ENCODE measurements at regions of chr4 and their contacts with region 1.

Region 1: DNA sequence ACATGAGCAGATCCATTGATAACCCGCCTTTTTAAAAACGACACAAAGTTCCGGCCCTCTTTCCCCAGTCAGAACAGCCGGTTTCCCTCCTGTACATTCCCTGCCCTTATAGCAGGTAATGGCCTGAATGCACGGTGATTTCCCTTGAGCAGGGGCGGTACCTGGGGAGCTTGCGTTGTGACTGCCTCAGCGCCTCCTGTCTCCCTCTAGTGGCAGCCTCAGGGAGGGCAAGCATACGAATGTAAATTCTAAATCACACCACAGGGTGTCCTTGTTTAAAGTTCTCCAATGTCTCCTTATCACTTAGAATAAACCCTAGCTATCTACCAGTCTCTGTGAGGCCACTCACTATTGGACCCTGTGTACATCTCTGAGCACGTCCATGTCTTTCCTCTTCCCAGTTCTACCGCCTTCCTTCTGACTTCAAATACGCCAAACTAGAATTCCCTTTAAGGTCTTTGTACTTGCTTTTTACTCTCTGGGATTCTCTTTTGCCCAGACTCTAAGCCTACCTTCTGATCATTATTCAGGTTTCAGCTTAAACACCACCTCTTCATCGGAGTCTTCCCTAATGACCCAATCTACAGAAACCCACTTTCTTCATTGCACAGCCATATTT is 18.4 kb upstream of the LDB2 start:
- DNase-seq: peak; percentile 70
- ATAC-seq: peak; percentile 96
- H3K4me3 ChIP-seq: no peak overlapping the region
- H3K27ac ChIP-seq: no peak overlapping the region
- H3K4me1 ChIP-seq: no peaks in the 10 kb centered on the region
- H3K27me3 ChIP-seq: no peaks in the 10 kb centered on the region
- CTCF ChIP-seq: peak; percentile 97 to 98 (median 98)
- POLR2A ChIP-seq: no peak
- RAD21 ChIP-seq: peak; percentile 75

Region 2: DNA sequence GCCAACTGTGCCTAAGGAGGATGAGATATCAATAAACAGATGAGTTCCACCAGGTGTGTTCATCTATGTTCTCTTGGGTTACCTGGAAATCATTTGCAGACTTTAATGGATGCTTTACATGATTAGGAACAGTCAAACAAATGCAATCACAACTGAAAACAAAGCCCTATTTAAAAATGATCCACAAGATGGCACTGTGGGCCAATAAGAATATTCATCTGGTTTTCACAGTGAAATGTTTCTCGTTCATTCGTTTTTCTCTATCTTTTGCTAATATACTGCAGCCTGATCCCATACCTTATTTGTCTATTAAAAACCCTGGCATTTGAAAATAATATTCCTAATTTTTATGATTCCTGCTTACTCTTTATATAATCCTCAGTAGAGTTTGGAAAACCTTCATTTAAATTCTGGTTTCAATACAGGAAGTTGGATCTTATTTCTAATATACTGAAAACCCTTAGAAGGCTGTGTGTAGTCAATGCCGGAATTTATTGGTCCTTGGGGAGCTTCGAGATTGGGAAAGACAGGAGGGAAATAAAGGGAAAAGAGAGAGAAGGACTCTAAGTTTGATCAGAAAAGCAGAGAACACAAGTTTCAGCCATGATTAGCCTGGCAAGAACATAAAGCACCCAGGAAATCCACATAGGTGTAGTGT is 626.8 kb before region 1 on chr4:
- CTCF ChIA-PET with region 1: no interaction called
- POLR2A ChIA-PET with region 1: no interaction called
- RAD21 ChIA-PET with region 1: no interaction called
- intact Hi-C with region 1: loop called (anchors 2 kb)
- DNase-seq: peak; percentile 7
- ATAC-seq: peak; percentile 62; the same call in 1 of the 2 replicates
- H3K4me3 ChIP-seq: no peak overlapping the region
- H3K27ac ChIP-seq: no peak overlapping the region
- H3K4me1 ChIP-seq: no peaks in the 10 kb centered on the region
- H3K27me3 ChIP-seq: peaks cover 17% of the 10 kb centered on the region
- CTCF ChIP-seq: peak; percentile 32 to 70 (median 59); a peak in 4 of 6 replicates
- POLR2A ChIP-seq: no peak
- RAD21 ChIP-seq: peak; percentile 74

Region 3: DNA sequence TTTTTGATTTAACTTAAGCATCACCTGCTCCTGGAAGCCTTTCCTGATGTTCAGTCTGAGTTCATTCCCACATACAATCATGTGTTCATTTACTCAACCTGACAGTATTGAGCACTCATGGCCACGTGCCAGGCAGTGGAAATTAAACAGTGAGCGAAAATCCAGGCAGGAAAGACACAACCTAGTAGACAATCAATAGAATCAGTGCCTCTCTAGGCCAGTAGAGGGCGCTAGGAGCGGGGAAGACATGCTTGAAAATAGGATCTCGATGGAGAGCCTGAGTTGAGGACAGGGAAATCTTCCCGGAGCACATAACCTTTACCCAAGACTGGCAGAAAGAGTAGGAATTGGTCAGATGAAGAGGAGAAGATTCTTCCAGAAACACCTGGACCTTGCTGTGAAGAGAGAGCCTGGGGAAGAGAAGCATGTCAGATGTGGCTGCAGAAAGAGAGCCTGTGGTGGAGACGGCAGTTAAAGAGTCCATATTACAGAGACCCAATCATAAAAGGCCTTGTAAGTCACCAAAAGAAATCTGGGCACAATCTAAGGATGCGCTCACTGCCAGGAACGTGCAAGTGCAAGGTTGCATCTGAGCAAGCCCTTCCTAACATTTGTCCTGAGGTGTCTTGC is 121.9 kb before region 1 on chr4:
- CTCF ChIA-PET with region 1: interaction called, 10 read pairs
- POLR2A ChIA-PET with region 1: no interaction called
- RAD21 ChIA-PET with region 1: no interaction called
- intact Hi-C with region 1: no loop called
- DNase-seq: peak; percentile 34
- ATAC-seq: peak; percentile 60
- H3K4me3 ChIP-seq: no peak overlapping the region
- H3K27ac ChIP-seq: no peak overlapping the region
- H3K4me1 ChIP-seq: no peaks in the 10 kb centered on the region
- H3K27me3 ChIP-seq: peaks cover 12% of the 10 kb centered on the region; the same call in 1 of the 2 replicates
- CTCF ChIP-seq: peak; percentile 47 to 81 (median 77); a peak in 5 of 6 replicates
- POLR2A ChIP-seq: no peak
- RAD21 ChIP-seq: peak; percentile 54

Region 4: GRCh38 chr4:17112292-17112659 is 195.4 kb after region 1 on chr4:
- CTCF ChIA-PET with region 1: interaction called, 5 read pairs
- POLR2A ChIA-PET with region 1: no interaction called
- RAD21 ChIA-PET with region 1: no interaction called
- intact Hi-C with region 1: loop called (anchors 10 kb)
- DNase-seq: no peak
- ATAC-seq: peak; percentile 69
- H3K4me3 ChIP-seq: no peak overlapping the region
- H3K27ac ChIP-seq: no peak overlapping the region
- H3K4me1 ChIP-seq: no peaks in the 10 kb centered on the region
- H3K27me3 ChIP-seq: no peaks in the 10 kb centered on the region
- CTCF ChIP-seq: peak; percentile 36 to 69 (median 67)
- POLR2A ChIP-seq: no peak
- RAD21 ChIP-seq: peak; percentile 47

Measured in HCT116 (cell line).